Heart right ventricle (tissue), 16 donors: ENCODE measurements at regions of chr7 and their contacts with region 1.

Region 1: DNA sequence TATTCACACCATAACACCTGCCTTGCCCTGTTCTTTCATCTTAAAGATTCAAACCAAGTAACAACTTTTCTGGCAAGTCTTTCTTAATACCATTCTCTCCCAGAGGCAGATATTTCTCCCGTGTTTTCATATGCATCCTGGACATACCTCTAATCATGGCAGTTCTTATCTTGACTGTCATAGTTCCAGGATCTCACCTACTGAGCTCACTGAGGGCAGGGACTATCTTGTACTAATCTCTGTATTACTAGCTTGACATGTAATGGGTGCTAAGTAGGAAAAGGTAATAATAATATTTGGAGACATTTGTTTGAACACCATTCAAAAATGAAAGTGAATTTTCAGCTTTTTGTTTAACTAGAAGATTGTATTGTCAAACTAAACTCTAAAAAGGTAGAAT is 14.8 kb downstream of the DNAH11 start:
- DNase-seq: no peak
- ATAC-seq: no peak
- H3K4me3 ChIP-seq: no peak overlapping the region
- H3K27ac ChIP-seq: no peak overlapping the region
- H3K4me1 ChIP-seq: peaks cover 0 to 10% (median 0%) of the 10 kb centered on the region in 9 donors
- H3K27me3 ChIP-seq: peaks cover 0 to 21% (median 0%) of the 10 kb centered on the region in 7 donors
- CTCF ChIP-seq: no peak

Region 2: DNA sequence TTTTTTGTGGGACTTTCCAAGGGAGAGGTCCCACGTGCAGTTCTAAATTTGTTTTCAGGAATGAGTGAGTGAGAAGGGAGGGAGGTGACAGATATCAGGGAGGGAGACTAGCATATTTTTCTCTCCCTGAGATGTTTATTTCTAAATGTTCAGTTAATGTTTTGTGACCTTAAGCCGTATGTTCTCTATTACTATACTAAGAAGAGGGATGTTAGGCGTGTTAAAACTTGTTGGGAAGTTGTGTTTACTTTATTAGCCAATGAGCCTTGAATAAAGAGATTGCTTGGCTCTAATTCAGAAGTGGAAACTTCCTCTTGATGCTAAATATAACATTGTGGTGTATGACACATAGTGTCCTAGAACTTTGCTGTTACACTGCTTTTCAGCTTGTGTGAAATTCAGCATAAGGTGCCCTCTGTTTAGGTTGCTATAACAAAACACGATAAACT is 22.4 kb after region 1 on chr7:
- intact Hi-C with region 1: loop called in 1 of 10 experiments (anchors 2 kb)
- DNase-seq: no peak
- ATAC-seq: peak; percentile 58 to 95 (median 78)
- H3K4me3 ChIP-seq: no peak overlapping the region
- H3K27ac ChIP-seq: peak overlapping the region in 6 of 10 donors; percentile 9 to 70 (median 44)
- H3K4me1 ChIP-seq: peaks cover 0 to 17% (median 3%) of the 10 kb centered on the region in 9 donors
- H3K27me3 ChIP-seq: no peaks in the 10 kb centered on the region
- CTCF ChIP-seq: no peak

Region 3: DNA sequence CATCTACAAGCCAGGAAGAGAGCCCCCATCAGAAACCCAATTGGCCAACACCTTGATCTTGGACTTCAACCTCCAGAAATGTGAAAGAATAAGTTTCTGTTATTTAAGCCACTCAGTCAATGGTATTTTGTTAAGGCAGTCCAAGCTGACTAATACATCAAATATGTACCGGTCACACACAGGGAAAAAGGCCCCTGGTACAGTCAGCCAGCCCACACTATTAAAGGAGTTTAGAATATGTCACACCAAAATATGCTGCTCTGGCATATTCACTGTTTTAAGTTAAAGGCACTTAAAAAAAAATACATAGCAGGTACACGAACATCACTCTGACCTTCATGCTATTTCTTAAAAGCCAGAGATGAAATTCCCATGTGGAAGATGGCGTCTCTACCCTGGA is 403.3 kb after region 1 on chr7:
- intact Hi-C with region 1: loop called in 1 of 10 experiments (anchors 5 kb)
- DNase-seq: no peak
- ATAC-seq: no peak
- H3K4me3 ChIP-seq: no peak overlapping the region
- H3K27ac ChIP-seq: no peak overlapping the region
- H3K4me1 ChIP-seq: peaks cover 0 to 4% (median 0%) of the 10 kb centered on the region in 9 donors
- H3K27me3 ChIP-seq: no peaks in the 10 kb centered on the region
- CTCF ChIP-seq: no peak